ENCODE measurements at regions of chr7 and their contacts with region 1.

Region 1: GRCh38 chr7:113421696-113422330 is 303.5 kb upstream of the SMIM30 start:
- DNase-seq: peak; percentile 94
- H3K4me3 ChIP-seq: no peak overlapping the region
- H3K27ac ChIP-seq: no peak overlapping the region
- H3K4me1 ChIP-seq: no peaks in the 10 kb centered on the region
- H3K27me3 ChIP-seq: no peaks in the 10 kb centered on the region
- CTCF ChIP-seq: peak; percentile 70 to 80 (median 78)
- EP300 ChIP-seq: no peak
- POLR2A ChIP-seq: no peak

Region 2: GRCh38 chr7:112550468-112551060 is 871.2 kb before region 1 on chr7:
- intact Hi-C with region 1: loop called (anchors 5 kb)
- DNase-seq: no peak
- H3K4me3 ChIP-seq: no peak overlapping the region
- H3K27ac ChIP-seq: no peak overlapping the region
- H3K4me1 ChIP-seq: no peaks in the 10 kb centered on the region
- H3K27me3 ChIP-seq: peaks cover 0 to 7% (median 0%) of the 10 kb centered on the region in 4 donors
- CTCF ChIP-seq: peak; percentile 73 to 87 (median 73)
- EP300 ChIP-seq: no peak
- POLR2A ChIP-seq: no peak

Region 3: DNA sequence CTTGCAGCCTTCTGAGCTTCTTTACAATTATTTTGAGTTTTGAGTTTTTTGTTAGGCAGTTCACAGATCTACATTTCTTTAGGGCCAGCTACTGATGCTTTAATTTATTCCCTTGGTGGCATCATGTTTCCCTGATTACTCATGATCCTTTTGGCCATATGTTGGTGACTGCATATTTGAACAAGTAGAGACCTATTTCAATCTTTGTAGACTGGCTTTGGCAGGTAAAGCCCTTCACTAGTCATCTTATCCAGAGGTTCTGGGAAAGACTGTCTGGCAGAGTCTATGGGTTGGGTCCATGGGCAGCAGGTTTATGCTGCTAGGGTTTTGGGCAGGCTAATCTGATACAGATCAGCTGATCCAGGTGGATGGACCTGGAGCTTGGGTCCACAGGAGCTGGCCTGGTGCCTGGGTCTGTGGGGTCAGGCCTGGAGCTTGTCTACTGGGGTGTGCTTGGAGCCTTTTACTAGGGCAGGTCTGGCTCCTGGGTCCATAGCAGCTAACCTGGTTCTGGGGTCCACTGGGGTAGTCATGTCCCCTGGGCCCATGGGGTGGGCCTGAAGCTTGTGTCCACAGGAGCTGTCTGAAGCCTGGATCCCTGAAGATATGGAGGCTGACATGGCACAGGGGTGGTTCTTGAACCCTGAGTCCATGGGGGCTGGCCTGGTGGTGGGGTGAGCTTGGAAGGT is 407.9 kb before region 1 on chr7:
- intact Hi-C with region 1: loop called (anchors 5 kb)
- DNase-seq: no peak
- H3K4me3 ChIP-seq: no peak overlapping the region
- H3K27ac ChIP-seq: no peak overlapping the region
- H3K4me1 ChIP-seq: no peaks in the 10 kb centered on the region
- H3K27me3 ChIP-seq: no peaks in the 10 kb centered on the region
- CTCF ChIP-seq: no peak
- EP300 ChIP-seq: no peak
- POLR2A ChIP-seq: no peak

Region 4: DNA sequence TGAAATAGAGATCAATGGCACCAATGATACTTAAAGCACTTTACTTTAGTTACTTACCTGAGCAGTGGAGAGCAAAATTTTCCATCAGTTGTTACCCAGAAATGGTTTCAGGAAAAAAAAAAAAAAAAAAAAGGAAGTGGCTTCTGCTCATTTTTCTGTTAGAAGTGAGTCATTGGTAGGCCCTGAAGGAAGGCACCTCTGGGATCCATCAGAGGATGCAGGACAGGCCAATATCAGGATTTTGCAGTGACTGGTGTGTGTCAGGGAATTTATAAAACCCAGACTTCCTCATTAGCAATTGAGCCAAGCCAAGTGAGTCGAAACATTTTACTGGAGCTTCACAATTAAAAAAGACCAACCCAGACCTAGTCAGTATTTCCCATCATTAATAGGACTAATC is 301.2 kb before region 1 on chr7:
- intact Hi-C with region 1: no loop called
- DNase-seq: no peak
- H3K4me3 ChIP-seq: no peak overlapping the region
- H3K27ac ChIP-seq: no peak overlapping the region
- H3K4me1 ChIP-seq: peaks cover 5 to 16% (median 14%) of the 10 kb centered on the region in 4 donors
- H3K27me3 ChIP-seq: no peaks in the 10 kb centered on the region
- CTCF ChIP-seq: no peak
- EP300 ChIP-seq: no peak
- POLR2A ChIP-seq: no peak

Region 5: GRCh38 chr7:113159746-113160339 is 262.0 kb before region 1 on chr7:
- intact Hi-C with region 1: loop called (anchors 10 kb)
- DNase-seq: no peak
- H3K4me3 ChIP-seq: no peak overlapping the region
- H3K27ac ChIP-seq: no peak overlapping the region
- H3K4me1 ChIP-seq: no peaks in the 10 kb centered on the region
- H3K27me3 ChIP-seq: no peaks in the 10 kb centered on the region
- CTCF ChIP-seq: peak; percentile 27 to 49 (median 28)
- EP300 ChIP-seq: no peak
- POLR2A ChIP-seq: no peak

Region 6: DNA sequence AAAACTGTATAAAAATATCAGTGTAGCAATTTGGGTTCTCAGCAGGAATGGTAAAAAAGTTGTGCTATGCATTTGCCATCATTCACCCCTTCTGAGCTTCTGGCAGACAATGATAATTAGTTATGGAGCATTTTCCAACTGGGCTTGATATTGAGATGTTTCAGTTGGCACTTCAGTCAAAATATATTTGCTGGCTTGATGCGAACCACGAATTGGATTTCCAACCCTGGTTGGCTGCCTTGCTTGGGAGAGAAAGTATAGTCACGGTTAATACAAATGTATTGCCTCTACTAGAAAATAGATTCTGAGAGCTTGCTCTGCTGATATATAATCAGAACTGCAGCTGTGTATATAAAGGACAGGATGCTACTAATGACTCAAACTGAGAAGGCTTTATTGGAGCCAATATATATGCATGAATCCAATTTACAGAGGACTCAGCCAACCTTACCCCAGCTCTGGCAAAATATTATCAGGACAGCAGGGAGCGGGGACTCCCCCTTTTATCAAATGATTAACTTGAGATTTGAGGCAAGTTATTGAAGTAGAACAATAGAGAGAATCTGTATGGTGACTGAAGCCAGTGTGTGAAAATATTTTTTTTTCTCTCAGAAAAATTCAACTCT is 83.6 kb before region 1 on chr7:
- intact Hi-C with region 1: no loop called
- DNase-seq: no peak
- H3K4me3 ChIP-seq: no peak overlapping the region
- H3K27ac ChIP-seq: no peak overlapping the region
- H3K4me1 ChIP-seq: no peaks in the 10 kb centered on the region
- H3K27me3 ChIP-seq: no peaks in the 10 kb centered on the region
- CTCF ChIP-seq: no peak
- EP300 ChIP-seq: no peak
- POLR2A ChIP-seq: no peak